OCI-LY7 (cell line): ENCODE measurements at regions of chr16 and their contacts with region 1.

Region 1: DNA sequence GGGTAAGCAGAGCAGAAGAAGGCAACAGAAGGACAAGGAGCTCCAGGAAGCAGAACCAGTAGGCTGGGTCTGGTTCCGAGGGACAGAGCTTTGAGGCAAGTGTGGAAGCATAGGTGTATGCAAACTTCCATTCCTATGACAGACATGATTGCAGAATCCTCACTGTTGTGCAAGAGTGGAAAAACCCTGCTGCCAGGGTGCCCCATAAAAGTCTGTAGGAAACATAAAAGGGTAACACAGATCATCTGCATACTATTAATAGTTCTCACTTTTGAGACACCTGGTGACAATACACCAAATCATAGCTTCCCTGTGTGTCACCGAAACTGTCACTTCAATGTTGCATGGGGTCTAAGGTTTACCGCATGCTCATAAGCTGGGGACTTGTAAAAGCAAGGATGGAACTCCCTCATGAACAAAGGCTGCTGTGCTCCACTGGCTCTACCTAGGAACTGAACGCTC is 39.7 kb downstream of the ARHGAP17 start:
- DNase-seq: peak; percentile 89
- H3K4me3 ChIP-seq: peak overlapping the region; percentile 51
- H3K27ac ChIP-seq: peak overlapping the region; percentile 82
- H3K4me1 ChIP-seq: peaks cover 88% of the 10 kb centered on the region
- CTCF ChIP-seq: no peak

Region 2: DNA sequence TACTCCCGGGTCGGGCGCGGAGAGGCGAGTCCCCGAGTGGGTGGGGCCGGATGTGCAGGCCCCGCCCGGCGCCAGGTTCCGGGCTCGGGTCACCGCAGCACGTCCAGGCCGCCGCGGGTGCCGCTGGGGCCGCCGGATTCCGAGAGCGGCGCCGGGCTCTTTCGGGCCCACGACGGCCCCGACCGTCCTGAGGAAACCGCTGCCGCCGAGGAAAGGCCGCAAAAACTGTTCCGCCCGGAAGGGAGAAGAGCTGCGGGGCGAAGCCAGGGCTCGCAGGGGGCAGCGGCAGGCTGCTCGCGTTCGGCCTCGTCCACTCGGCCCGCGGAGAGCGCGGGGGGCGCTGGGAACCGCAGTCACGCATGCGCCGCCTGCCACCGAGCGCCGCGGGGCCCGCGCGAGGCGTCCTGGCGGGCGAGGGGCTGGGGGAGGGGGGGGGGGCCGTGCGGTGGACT is 282.1 kb after region 1 on chr16 and contains the start of gene ZKSCAN2:
- CTCF ChIA-PET with region 1: no interaction called
- POLR2A ChIA-PET with region 1: no interaction called
- intact Hi-C with region 1: loop called (anchors 10 kb)
- DNase-seq: peak; percentile 92
- H3K4me3 ChIP-seq: peak within 1 kb of the TSS; percentile 95
- H3K27ac ChIP-seq: peak within 1 kb of the TSS; percentile 77
- H3K4me1 ChIP-seq: peaks cover 30% of the 10 kb centered on the region
- CTCF ChIP-seq: no peak
- total RNA-seq, gene ZKSCAN2: 7.6 and 10.1 TPM in 2 replicates